Heart right ventricle (tissue), 16 donors: ENCODE measurements at regions of chr22 and their contacts with region 1.

Region 1: GRCh38 chr22:40487663-40488249 is 117.4 kb downstream of the SGSM3 start:
- DNase-seq: no peak
- ATAC-seq: no peak
- H3K4me3 ChIP-seq: no peak overlapping the region
- H3K27ac ChIP-seq: peak overlapping the region in 3 of 10 donors; percentile 17 to 39 (median 34)
- H3K4me1 ChIP-seq: peaks cover 0 to 69% (median 51%) of the 10 kb centered on the region in 9 donors
- H3K27me3 ChIP-seq: no peaks in the 10 kb centered on the region
- CTCF ChIP-seq: peak; percentile 25 to 77 (median 61)

Region 2: GRCh38 chr22:40449676-40450035 is 38.1 kb before region 1 on chr22:
- intact Hi-C with region 1: loop called in 1 of 10 experiments (anchors 5 kb)
- DNase-seq: no peak
- ATAC-seq: no peak
- H3K4me3 ChIP-seq: no peak overlapping the region
- H3K27ac ChIP-seq: peak overlapping the region in 4 of 10 donors; percentile 7 to 26 (median 8)
- H3K4me1 ChIP-seq: peaks cover 0 to 99% (median 54%) of the 10 kb centered on the region in 9 donors
- H3K27me3 ChIP-seq: no peaks in the 10 kb centered on the region
- CTCF ChIP-seq: no peak

Region 3: DNA sequence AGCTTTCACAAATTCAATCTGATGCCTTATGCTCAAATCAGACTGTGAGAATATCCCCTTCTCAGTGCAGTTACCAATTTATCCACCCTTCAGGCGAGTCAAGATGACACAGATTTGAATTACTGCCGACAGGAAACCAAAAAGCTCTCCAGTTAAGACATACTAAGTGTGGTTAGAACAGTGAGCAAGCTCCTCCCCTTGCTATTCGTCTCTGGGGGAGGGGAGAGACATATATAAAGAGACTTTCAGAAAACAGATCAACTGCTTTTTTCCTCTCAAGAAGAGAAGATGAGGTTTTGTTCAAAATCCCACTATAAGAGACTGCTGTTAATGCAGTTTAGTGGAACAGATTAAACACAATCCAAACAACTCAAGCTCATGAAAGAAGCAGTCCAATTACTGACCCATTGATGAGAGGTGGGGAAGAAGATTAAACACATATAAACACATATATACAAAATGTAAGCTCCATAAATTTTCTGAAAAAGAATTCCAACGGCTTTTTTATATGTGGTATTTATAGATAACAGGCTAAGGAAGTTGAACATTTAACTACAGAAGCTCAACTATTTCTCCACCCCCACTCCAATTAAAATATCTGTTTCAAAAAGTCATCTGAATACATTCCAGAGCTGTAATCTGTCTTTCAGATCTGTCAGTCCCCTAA is 46.1 kb after region 1 on chr22:
- intact Hi-C with region 1: loop called in 1 of 10 experiments (anchors 10 kb)
- DNase-seq: no peak
- ATAC-seq: peak; percentile 57 to 85 (median 76)
- H3K4me3 ChIP-seq: peak overlapping the region in 8 of 10 donors; percentile 4 to 41 (median 30)
- H3K27ac ChIP-seq: peak overlapping the region; percentile 5 to 64 (median 39)
- H3K4me1 ChIP-seq: peaks cover 11 to 60% (median 44%) of the 10 kb centered on the region in 9 donors
- H3K27me3 ChIP-seq: no peaks in the 10 kb centered on the region
- CTCF ChIP-seq: no peak

Region 4: GRCh38 chr22:40541300-40541699 is 53.5 kb after region 1 on chr22:
- intact Hi-C with region 1: loop called in 2 of 10 experiments (anchors 10 kb)
- DNase-seq: no peak
- ATAC-seq: peak in 1 of 8 donors; percentile 22
- H3K4me3 ChIP-seq: no peak overlapping the region
- H3K27ac ChIP-seq: no peak overlapping the region
- H3K4me1 ChIP-seq: peaks cover 0 to 28% (median 9%) of the 10 kb centered on the region in 9 donors
- H3K27me3 ChIP-seq: no peaks in the 10 kb centered on the region
- CTCF ChIP-seq: no peak